ENCODE measurements at regions of chr12 and their contacts with region 1.

Region 1: GRCh38 chr12:124399622-124400021 is 104.7 kb downstream of the RFLNA start:
- DNase-seq: no peak
- H3K4me3 ChIP-seq: no peak overlapping the region
- CTCF ChIP-seq: peak; percentile 71

Region 2: DNA sequence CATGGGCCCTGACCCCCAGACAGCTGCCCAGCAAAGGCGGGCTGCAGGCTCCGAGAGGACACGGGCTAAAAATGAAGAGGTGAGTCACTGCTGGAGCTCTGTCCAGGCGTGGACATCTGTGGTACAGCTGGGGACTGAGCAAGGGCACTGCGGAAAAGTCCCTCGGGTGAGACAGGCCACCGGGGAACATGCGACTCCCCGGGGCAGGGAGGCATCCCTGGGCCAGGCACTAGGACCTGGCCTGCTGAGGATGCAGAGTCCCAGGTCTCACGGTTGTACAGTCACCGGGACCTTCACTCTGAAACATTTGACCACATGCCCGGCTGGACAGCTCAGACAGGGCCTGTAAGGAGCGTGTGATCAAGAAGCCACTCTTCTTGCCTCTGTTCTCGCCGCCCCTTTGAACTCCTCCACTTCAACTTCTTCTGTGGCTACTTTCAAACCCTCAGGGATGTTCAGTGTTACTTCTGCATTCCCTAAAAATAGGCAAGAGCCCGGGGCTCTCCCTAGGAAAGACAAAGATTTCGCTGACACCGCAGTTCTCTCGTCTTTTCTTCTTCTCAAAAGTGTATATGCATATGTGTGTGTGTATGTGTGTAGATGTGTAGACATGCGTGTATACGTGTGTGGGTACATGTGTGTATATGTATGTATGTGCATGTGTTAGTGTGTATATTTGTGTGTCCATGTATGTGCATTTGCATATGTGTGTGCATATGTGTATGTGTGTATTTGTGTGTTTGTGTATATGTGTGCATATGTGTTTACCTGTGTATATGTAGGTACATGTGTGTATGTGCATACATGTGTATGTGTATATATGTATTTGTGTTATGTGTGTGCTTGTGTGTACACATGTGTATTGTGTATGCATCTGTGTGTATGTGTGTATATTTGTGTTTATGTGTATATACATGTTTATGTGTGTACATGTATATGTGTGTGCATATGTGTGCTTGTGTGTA is 109.7 kb before region 1 on chr12:
- CTCF ChIA-PET with region 1: no interaction called
- POLR2A ChIA-PET with region 1: no interaction called
- DNase-seq: no peak
- H3K4me3 ChIP-seq: no peak overlapping the region
- CTCF ChIP-seq: no peak

Region 3: GRCh38 chr12:124411281-124411878 is 11.8 kb after region 1 on chr12:
- CTCF ChIA-PET with region 1: interaction called, 45 read pairs
- POLR2A ChIA-PET with region 1: no interaction called
- DNase-seq: peak; percentile 63
- H3K4me3 ChIP-seq: no peak overlapping the region
- CTCF ChIP-seq: no peak

Region 4: GRCh38 chr12:124420996-124421674 is 21.5 kb after region 1 on chr12:
- CTCF ChIA-PET with region 1: interaction called, 11 read pairs
- POLR2A ChIA-PET with region 1: no interaction called
- DNase-seq: no peak
- H3K4me3 ChIP-seq: no peak overlapping the region
- CTCF ChIP-seq: no peak

Region 5: DNA sequence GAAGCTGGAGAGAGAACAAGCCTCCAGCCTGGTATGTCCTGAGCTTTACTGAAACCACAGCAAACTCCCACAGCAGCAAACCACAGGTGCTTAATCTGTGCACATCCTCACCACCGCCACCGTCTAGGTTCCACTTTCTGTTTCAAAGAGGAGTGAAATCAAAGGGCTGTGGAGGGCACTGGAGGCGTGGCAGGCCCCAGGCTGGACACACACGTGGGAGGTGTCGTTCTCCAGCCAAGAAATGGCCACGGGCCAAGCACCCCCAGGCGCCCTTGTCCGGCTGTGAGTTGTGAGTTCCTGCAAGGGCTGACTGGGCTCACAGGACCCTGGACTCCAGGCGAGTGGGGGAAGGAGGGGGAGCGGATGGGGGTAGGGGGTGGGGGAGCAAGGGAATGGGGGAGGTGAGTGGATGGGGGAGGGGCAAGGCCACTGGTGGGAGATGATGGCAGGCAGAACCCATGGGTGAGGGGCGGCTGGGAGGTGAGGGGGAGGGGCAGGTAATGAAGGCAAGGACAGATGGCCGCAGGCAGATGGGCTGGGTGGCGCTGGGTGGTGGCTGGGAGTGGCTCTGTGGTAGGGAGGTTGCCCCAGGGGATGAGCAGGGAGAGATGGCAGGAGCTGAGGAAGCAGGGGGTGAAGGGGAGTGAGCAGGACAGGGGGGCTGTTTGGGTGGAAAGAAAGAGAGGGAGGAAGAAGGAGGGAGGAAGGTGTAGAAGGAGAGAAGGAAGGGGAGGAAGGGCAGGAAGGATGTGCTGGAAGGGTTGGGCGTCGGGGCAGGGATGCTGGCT is 81.0 kb after region 1 on chr12:
- CTCF ChIA-PET with region 1: no interaction called
- POLR2A ChIA-PET with region 1: no interaction called
- DNase-seq: no peak
- H3K4me3 ChIP-seq: no peak overlapping the region
- CTCF ChIP-seq: no peak

Region 6: DNA sequence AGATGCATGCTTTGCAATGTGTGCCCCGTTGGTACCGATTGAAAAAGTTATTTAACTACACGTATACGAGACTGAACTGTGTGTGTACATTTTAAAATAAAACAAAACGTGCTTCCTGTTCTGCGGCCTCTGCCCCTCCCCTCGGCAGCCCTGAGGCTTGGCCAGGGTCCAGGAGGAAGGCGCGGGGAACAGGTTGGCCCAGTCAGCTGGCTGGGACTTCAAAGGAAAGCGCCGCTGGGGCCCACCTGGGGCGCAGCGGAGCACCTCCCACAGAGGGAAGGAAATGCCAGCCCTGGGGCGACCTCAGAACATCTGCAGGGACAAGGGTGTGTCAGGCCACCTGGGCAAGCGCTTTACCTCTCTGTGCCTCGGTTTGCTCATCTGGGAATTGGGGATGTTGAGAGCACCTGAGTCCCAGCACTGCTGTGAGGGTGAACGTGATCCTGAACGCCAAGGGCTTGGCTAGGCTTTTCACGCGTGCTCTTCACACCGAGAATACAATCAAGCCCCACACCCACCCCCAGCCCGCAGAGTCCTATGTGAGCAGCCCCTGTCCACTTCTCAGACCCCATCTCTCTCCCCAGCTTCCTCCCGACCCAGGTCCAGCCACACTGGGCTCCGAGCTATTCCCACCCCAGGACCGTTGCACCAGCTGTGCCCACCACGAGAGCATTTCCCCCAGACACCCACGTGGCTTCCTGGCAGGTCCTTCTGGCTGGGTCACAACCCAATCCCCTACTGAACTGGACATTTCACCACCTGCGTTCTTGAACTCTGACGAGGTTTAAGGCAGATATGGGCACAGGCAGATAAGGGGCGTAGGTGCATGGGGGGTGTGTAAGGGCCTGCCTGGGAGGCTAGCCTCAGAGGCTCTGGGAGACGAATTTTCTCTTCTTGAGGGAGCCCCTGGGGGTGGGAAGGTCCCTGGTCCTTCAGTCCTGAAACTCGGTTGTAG is 209.7 kb after region 1 on chr12:
- CTCF ChIA-PET with region 1: no interaction called
- POLR2A ChIA-PET with region 1: no interaction called
- DNase-seq: no peak
- H3K4me3 ChIP-seq: no peak overlapping the region
- CTCF ChIP-seq: no peak